ENCODE measurements at regions of chr11 and their contacts with region 1.

Region 1: GRCh38 chr11:114262681-114263512 is 33.3 kb upstream of the NNMT start:
- DNase-seq: no peak
- CTCF ChIP-seq: peak; percentile 40

Region 2: DNA sequence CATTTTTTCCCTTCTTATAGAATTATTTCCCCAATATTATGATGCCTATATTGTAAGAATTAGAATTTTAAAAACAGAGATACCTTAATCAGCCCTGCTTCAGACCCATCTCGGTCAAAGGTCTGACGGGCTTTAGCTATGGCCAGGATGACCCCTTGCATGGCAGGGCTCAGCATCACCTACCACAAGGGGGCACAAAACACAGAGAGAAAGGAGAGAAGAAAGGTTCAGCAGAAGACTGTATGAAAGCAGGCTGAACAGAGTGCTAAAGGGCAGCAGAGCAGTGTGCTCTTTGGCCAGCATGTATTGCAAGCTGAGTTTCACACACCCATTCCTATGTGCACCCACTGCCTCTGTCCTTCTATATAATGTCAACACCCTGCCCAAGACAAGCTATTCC is 456.5 kb before region 1 on chr11:
- CTCF ChIA-PET with region 1: interaction called, 32 read pairs
- POLR2A ChIA-PET with region 1: no interaction called
- DNase-seq: peak; percentile 43
- CTCF ChIP-seq: peak; percentile 65

Region 3: GRCh38 chr11:113896156-113896879 is 366.6 kb before region 1 on chr11:
- CTCF ChIA-PET with region 1: interaction called, 107 read pairs
- POLR2A ChIA-PET with region 1: interaction called, 4 read pairs
- DNase-seq: peak; percentile 54
- CTCF ChIP-seq: peak; percentile 80

Region 4: GRCh38 chr11:113994077-113994954 is 268.6 kb before region 1 on chr11:
- CTCF ChIA-PET with region 1: interaction called, 80 read pairs
- POLR2A ChIA-PET with region 1: no interaction called
- DNase-seq: peak; percentile 53
- CTCF ChIP-seq: peak; percentile 42

Region 5: DNA sequence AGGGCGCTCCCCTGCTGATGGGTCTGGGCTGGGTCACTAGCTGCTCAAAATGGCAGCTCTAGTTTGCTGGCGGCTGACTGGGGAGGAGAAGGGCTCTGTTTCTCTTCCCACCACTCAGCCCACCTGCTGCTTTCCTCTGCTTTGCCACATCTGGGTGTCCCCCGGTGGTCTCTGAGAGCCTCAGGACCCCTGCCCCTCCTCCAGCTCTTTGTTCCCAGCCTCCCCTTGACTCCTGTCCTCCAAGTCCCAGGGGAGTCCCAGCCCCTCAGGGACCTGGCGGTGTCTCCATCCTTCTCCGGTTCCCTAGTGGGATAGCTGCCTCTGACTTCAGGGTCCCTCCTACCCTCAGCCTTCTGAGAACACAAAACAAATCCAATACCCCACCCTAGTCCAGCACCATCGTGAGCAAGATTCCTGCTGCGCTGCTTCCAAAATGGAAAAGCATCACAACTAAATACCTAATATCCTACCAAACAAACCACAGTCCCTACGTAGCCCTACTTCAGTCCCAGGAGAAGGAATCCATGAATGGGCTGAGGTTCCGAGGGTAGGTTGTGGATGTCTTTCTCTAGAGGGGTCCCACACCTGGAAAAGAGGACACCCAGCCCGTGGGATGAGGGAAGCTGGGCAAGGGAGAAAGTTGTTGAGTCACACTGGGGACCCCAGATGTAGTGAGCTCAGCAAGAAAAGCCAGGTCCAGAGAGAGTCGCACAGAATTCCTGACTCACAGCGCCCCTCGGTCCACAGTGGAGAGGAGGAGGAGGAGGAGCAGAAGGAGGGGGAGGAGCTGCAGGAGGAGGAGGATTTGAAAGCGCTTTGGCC is 11.7 kb before region 1 on chr11:
- CTCF ChIA-PET with region 1: interaction called, 63 read pairs
- POLR2A ChIA-PET with region 1: no interaction called
- DNase-seq: no peak
- CTCF ChIP-seq: no peak

Region 6: DNA sequence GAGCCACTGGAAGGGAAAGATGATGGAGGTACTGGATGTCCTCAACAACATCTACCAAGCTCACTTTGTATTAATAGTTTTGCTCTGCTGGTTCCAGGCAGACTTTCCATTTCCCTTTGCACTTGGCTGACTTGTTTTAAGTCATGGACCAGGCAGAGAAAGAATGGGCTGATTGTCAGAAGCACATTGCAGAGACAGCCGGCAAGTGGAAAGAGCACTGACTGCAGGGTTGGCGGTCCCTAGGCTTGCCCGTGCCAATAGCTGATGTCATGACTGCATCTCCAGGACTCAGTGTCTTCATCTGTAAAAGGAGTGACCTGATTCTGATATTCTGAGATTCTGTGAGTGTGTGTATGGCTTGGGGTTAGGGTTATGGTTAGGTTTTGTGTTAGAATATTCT is 12.4 kb after region 1 on chr11:
- CTCF ChIA-PET with region 1: interaction called, 32 read pairs
- POLR2A ChIA-PET with region 1: no interaction called
- DNase-seq: no peak
- CTCF ChIP-seq: no peak

Region 7: DNA sequence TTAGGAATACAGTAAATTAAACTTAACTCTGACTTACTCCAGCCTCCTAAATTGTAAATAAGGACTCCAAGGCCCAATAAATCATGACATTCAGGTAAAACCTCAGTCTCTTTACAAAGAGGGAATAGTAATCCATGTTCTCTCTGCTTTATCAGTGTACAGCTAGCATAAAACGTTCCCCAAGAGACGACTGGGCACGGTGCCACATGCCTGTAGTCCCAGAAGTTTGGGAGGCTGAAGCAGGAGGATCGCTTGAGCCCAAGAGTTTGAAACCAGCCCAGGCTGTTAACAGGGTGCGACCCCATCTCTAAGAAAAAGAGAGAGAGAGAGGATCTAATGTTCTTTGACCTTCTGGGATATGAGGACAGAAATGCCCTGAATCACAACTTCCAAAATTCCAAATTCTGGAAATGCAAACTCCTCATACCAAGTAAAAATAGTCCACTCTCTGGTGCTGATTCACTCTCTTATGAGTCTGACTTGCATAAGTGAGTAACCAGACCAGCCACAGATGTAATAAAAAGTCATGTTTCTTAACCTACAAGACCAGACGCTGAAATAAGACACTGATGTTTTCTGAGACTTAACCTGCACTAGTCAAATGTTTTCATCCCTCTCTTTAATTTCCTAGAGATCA is 58.8 kb after region 1 on chr11:
- CTCF ChIA-PET with region 1: no interaction called
- POLR2A ChIA-PET with region 1: no interaction called
- DNase-seq: no peak
- CTCF ChIP-seq: no peak

Region 8: GRCh38 chr11:114400217-114400914 is 137.5 kb after region 1 on chr11 and contains the starts of genes C11orf71 and RBM7:
- CTCF ChIA-PET with region 1: no interaction called
- POLR2A ChIA-PET with region 1: no interaction called
- DNase-seq: peak; percentile 95
- CTCF ChIP-seq: peak; percentile 14

Region 9: DNA sequence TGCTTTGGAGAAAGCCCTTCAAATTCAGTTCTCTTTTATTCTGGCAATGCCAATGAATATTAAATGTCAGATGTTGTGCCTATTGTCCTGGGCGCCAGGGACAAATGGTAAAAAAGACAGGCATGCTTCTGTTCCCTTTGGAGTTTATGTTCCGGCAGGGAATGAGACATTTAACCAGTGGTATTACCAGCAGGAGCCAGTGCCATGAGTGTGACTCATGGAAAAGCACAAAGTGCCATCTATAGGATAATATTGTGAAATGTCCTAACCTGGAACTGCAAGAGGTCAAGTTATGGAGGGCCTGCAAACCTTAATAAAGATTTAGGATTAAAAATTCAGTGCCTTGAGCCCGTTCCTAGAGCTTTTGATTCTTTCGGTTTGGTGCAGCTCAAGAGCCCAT is 215.9 kb after region 1 on chr11:
- CTCF ChIA-PET with region 1: no interaction called
- POLR2A ChIA-PET with region 1: no interaction called
- DNase-seq: no peak
- CTCF ChIP-seq: no peak

Measured in GM10248 (cell line).